Activated CD4-positive, alpha-beta T cell treated with anti-CD3 and anti-CD28 coated beads for 36 hours (primary cell): ENCODE measurements at regions of chr5 and their contacts with region 1.

Region 1: DNA sequence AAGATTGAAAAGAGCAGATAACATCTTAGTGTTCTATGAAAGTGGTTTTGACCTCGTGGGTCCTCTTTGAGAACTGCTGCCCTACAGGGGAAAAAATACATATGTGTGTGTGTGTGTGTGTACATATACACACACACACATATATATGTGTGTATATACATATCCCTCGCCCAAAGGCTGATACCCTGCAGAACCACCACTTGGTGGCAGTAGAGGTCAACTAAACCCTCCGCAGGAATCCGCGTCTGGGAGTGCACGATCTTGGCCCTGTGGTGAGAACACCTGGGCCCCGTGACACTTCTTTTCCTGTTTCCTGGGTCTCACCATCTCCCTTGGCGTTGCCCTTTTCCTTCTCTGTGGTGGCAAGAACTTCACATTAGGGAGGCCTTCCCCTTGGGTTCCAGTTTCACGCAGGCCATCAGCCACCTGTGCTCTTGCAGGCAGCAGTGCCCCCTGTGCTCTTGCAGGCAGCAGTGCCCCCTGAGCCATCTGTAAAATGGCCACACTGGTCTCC is 8.2 kb downstream of the IL9 start:
- DNase-seq: peak; percentile 83
- ATAC-seq: peak; percentile 77
- H3K4me3 Mint-ChIP-seq: no peak overlapping the region
- H3K27ac Mint-ChIP-seq: no peak overlapping the region
- H3K4me1 Mint-ChIP-seq: peaks cover 20% of the 10 kb centered on the region
- H3K27me3 Mint-ChIP-seq: peaks cover 40% of the 10 kb centered on the region

Region 2: DNA sequence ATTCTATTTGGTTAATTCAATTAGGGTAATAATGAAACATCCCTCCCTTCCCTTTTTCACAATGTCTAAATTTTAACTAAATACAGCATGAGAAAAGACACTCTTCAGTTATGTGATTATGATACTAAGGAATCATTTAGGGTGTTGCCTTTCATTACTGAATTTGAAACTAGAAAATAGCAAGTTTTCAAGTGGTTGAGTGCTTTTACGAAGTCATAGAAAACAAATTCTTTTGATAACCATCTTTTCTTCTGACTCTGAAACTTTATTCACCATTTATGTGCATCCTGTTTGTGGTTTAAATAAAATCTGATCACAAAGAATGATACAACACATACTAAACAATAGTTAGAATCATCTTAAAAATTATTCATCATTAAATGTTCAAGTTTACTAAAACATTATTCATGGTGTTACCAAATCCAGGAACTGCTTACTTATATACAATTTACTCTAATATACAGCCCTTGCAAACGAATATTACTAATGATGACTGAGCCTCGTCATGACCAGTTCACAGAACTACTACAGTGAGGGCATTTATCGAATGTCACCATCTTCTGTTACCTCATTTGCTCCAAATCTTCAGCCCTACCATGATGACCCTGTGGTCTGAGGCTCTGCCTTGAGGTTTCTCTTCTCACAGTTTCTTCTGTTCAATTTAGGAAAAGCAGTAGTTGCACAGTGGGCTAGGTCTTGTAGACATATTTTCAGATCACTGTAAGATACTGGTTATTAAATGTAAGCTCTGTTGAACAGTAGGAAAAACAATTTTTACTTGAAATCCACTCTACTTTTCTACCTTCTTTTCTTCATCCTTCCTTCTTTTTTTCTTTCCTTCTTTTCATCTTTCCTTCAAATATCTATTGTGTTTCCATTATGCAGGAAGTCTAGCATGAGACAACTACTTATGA is 26.6 kb after region 1 on chr5:
- CTCF ChIA-PET with region 1: interaction called, 3 read pairs
- POLR2A ChIA-PET with region 1: no interaction called
- intact Hi-C with region 1: loop called (anchors 1 kb)
- DNase-seq: peak; percentile 25
- ATAC-seq: peak; percentile 62
- H3K4me3 Mint-ChIP-seq: no peak overlapping the region
- H3K27ac Mint-ChIP-seq: no peak overlapping the region
- H3K4me1 Mint-ChIP-seq: peaks cover 27% of the 10 kb centered on the region
- H3K27me3 Mint-ChIP-seq: peaks cover 62% of the 10 kb centered on the region

Region 3: DNA sequence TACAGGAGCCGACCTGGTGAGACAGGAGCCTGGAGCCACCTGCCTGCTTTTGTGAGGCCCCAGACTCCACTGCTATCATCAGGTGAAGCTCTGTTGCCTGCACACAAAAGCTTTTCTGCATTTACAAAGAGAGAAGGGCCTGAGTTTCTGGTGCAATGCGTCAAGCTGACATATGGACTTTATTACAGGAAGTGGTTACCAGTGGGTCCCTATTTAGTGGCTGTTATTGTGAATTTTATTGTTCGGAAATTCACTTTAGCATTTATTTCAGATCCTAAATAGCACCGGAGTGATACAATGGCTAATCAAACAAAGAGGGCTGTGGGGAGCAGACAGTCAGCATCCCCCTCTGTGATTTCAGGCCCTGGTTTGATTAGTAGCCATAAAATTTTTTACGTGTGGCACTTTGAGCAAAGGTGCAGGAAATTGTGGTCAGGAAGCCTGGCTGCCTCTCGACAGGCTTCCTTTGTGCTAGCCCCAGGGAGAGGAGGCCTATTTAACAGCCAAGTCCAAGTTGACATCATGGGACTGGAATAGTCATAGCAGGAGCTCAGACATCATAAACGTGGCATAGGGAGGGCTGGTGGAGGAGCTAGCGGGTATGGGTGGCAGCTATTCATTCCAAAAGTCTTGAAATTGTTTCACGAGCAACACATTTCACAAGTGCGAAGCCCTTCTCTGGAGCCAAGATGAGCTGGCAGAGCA is 149.7 kb after region 1 on chr5:
- CTCF ChIA-PET with region 1: no interaction called
- POLR2A ChIA-PET with region 1: interaction called, 4 read pairs
- intact Hi-C with region 1: loop called (anchors 1 kb)
- DNase-seq: peak; percentile 79
- ATAC-seq: peak; percentile 97
- H3K4me3 Mint-ChIP-seq: no peak overlapping the region
- H3K27ac Mint-ChIP-seq: peak overlapping the region; percentile 59
- H3K4me1 Mint-ChIP-seq: peaks cover 25% of the 10 kb centered on the region
- H3K27me3 Mint-ChIP-seq: no peaks in the 10 kb centered on the region

Region 4: DNA sequence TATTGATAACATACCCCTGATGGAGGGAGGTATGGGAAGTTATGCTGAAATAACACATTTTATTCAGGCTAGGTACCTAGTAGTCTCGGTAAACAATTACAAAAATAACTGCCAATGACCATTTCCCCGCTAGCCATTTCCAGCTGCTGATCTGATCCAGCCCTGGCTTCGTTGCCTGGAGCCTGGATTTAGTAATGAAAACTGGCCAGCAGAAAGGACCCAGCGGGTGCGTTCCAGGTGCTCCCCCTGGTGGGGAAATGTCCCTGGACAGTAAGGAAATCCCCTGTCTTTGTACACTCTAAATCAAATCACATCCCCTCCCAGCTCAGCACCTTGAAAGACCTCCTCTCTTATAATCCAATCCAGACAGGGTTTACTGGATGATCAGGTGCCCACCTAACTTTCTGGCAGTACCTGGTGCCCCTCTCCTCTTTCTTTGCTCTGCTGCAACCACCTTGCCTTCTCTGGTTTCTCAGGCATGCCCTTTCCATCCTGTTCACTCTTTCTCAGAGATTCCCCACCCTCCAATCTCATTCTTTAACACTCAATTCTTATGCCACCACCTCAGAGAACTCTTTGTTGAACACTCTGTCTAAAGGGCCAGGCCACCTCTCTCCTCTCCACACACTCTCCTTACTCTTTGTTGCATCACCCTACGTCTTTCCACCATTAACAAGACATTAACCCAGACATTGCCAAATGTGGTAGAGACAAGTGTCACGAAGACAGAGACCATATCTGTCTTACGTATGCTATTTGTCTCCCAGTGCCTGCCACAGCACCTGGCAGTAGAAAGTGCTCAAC is 195.2 kb after region 1 on chr5:
- CTCF ChIA-PET with region 1: interaction called, 4 read pairs
- POLR2A ChIA-PET with region 1: no interaction called
- intact Hi-C with region 1: loop called (anchors 1 kb)
- DNase-seq: peak; percentile 76
- ATAC-seq: no peak
- H3K4me3 Mint-ChIP-seq: no peak overlapping the region
- H3K27ac Mint-ChIP-seq: no peak overlapping the region
- H3K4me1 Mint-ChIP-seq: peaks cover 3% of the 10 kb centered on the region
- H3K27me3 Mint-ChIP-seq: peaks cover 24% of the 10 kb centered on the region

Region 5: GRCh38 chr5:136174021-136174659 is 286.7 kb after region 1 on chr5:
- CTCF ChIA-PET with region 1: interaction called, 3 read pairs
- POLR2A ChIA-PET with region 1: no interaction called
- intact Hi-C with region 1: loop called (anchors 1 kb)
- DNase-seq: no peak
- ATAC-seq: no peak
- H3K4me3 Mint-ChIP-seq: no peak overlapping the region
- H3K27ac Mint-ChIP-seq: no peak overlapping the region
- H3K4me1 Mint-ChIP-seq: no peaks in the 10 kb centered on the region
- H3K27me3 Mint-ChIP-seq: peaks cover 2% of the 10 kb centered on the region

Region 6: DNA sequence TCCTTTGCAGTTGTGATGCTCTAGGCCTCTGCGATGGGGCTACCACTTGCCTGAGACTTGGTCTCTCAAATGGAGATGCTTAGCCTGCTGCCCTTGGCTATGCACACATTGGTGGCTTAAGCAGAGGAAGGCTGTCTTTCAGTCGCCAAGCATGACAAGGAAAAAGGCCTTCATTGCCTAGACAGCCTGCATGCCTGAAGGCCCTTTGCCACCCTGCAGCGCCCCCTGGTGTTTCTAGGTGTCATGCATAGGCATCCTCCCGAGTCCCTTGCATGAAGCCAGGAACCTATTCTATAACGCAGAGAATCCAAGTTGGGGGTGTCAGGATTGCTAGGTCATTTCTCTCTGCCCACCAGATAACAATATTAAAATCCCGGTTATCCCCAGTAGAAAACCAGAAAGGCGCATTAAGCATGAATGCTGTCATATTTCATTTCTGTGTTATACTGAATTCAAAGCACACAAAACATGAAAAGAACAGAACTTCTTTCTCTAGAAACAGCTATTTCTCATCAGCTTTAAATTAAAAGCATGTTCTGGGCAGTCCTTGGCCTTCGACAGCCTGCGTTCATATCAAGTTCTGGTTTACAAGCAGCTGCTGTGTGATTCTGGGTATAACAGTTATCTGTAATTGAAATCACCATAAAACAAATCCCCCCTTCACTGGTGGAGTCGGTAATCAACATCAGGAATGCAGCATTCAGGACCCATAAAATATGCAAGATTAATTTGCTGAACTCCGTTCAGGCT is 537.6 kb after region 1 on chr5:
- CTCF ChIA-PET with region 1: no interaction called
- POLR2A ChIA-PET with region 1: no interaction called
- intact Hi-C with region 1: loop called in 1 of 2 experiments (anchors 10 kb)
- DNase-seq: peak; percentile 79
- ATAC-seq: no peak
- H3K4me3 Mint-ChIP-seq: no peak overlapping the region
- H3K27ac Mint-ChIP-seq: no peak overlapping the region
- H3K4me1 Mint-ChIP-seq: no peaks in the 10 kb centered on the region
- H3K27me3 Mint-ChIP-seq: peaks cover under 1% of the 10 kb centered on the region